Tibial artery (tissue), 4 donors: ENCODE measurements at regions of chr14 and their contacts with region 1.

Region 1: GRCh38 chr14:29724991-29725390 is 202.7 kb downstream of the PRKD1 start:
- DNase-seq: no peak
- H3K4me3 ChIP-seq: no peak overlapping the region
- H3K27ac ChIP-seq: no peak overlapping the region
- H3K4me1 ChIP-seq: peaks cover 0 to 61% (median 17%) of the 10 kb centered on the region in 4 donors
- H3K27me3 ChIP-seq: no peaks in the 10 kb centered on the region
- CTCF ChIP-seq: no peak

Region 2: GRCh38 chr14:29927376-29928116 is 202.6 kb after region 1 on chr14 and contains the start of gene PRKD1:
- intact Hi-C with region 1: loop called (anchors 10 kb)
- DNase-seq: peak; percentile 51 to 80
- H3K4me3 ChIP-seq: peak within 1 kb of the TSS; percentile 64 to 65
- H3K27ac ChIP-seq: peak within 1 kb of the TSS; percentile 77 to 81
- H3K4me1 ChIP-seq: peaks cover 3 to 51% (median 14%) of the 10 kb centered on the region in 4 donors
- H3K27me3 ChIP-seq: no peaks in the 10 kb centered on the region
- CTCF ChIP-seq: peak; percentile 18 to 21

Region 3: DNA sequence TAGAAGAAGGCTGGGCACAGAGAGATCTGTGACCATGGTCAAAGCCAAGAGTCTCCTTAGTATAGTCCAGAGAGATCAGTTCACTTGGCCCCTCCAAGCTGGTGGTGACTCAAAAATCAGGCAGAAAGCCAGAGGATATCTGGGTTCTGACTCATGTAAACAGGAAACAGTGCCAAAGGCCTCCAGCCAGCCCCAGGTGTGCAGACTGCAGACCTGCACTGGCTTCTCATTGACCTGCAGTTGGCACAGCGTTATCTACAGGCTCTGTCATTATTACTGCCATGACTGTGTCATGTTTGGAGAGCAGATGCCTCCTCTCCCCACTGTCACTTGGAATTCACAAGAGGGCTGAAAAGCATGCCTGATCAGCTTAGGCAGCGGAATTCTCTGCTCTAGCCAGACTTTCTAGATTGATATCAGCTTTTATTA is 498.4 kb after region 1 on chr14:
- intact Hi-C with region 1: no loop called
- DNase-seq: peak; percentile 55 to 74
- H3K4me3 ChIP-seq: no peak overlapping the region
- H3K27ac ChIP-seq: peak overlapping the region; percentile 64 to 80
- H3K4me1 ChIP-seq: peaks cover 0 to 75% (median 55%) of the 10 kb centered on the region in 4 donors
- H3K27me3 ChIP-seq: no peaks in the 10 kb centered on the region
- CTCF ChIP-seq: no peak